ENCODE measurements at regions of chr7 and their contacts with region 1.

Region 1: DNA sequence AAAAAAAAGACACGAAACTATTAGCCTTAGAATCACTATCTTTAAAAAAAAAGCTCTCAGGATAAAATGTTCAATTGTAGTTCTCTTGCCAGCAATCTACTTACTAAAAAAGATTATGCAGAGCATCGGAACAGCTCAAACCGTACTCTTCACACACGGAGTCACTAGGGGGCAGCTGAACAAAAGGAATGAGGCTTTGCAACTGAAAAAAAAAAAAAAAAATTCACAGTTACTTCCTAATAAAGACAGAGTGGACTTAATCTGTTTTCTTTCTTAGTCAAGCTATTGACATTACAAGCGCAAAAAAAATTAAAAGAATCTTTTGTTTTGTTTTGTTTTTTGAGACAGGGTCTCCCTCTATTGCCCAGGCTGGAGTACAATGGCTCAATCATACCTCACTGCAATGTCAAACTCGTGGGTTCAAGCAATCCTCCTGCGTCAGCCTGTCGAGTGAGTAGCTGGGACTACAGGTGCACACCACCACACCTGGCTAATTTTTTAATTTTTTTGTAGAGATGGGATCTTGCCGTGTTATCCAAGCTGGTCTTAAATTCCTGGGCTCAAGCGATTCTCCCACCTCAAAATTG is 11.5 kb downstream of the PMS2 start:
- DNase-seq: no peak
- ATAC-seq: peak; percentile 71
- H3K4me3 Mint-ChIP-seq: no peak overlapping the region
- H3K27ac Mint-ChIP-seq: no peak overlapping the region
- H3K4me1 Mint-ChIP-seq: no peaks in the 10 kb centered on the region
- H3K27me3 Mint-ChIP-seq: no peaks in the 10 kb centered on the region
- CTCF ChIP-seq: peak; percentile 35

Region 2: DNA sequence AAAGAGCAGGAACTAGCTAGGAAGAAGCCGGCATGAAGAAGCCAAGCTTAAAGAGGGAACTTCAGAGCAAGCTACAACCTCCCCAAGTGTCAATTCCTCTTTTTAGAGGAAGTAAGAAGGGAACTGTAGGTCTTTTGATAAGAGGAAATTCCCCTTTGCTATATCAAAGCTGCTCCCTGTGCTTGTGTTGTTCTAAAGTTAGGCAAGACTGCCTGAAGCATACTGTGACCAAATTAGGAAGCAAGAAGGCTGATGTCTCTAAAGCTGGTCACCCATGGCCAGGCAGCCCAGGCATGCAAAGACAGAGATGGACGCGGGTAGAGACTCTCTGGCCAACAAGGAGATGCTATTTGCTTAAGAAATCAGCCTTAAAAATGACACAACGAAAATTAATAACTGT is 303.8 kb before region 1 on chr7:
- CTCF ChIA-PET with region 1: no interaction called
- POLR2A ChIA-PET with region 1: no interaction called
- intact Hi-C with region 1: no loop called
- DNase-seq: no peak
- ATAC-seq: peak; percentile 77
- H3K4me3 Mint-ChIP-seq: peak overlapping the region; percentile 87
- H3K27ac Mint-ChIP-seq: peak overlapping the region; percentile 91
- H3K4me1 Mint-ChIP-seq: peaks cover 100% of the 10 kb centered on the region
- H3K27me3 Mint-ChIP-seq: no peaks in the 10 kb centered on the region
- CTCF ChIP-seq: no peak

Region 3: GRCh38 chr7:6106140-6106904 is 109.0 kb after region 1 on chr7:
- CTCF ChIA-PET with region 1: interaction called, 4 read pairs
- POLR2A ChIA-PET with region 1: interaction called, 4 read pairs
- intact Hi-C with region 1: loop called (anchors 1 kb)
- DNase-seq: no peak
- ATAC-seq: no peak
- H3K4me3 Mint-ChIP-seq: peak overlapping the region; percentile 89
- H3K27ac Mint-ChIP-seq: peak overlapping the region; percentile 88
- H3K4me1 Mint-ChIP-seq: peaks cover 35% of the 10 kb centered on the region
- H3K27me3 Mint-ChIP-seq: no peaks in the 10 kb centered on the region
- CTCF ChIP-seq: no peak

Region 4: GRCh38 chr7:6323967-6324701 is 326.8 kb after region 1 on chr7:
- CTCF ChIA-PET with region 1: interaction called, 53 read pairs
- POLR2A ChIA-PET with region 1: no interaction called
- intact Hi-C with region 1: loop called (anchors 1 kb)
- DNase-seq: no peak
- ATAC-seq: no peak
- H3K4me3 Mint-ChIP-seq: no peak overlapping the region
- H3K27ac Mint-ChIP-seq: no peak overlapping the region
- H3K4me1 Mint-ChIP-seq: peaks cover 4% of the 10 kb centered on the region
- H3K27me3 Mint-ChIP-seq: peaks cover 2% of the 10 kb centered on the region
- CTCF ChIP-seq: no peak

Region 5: DNA sequence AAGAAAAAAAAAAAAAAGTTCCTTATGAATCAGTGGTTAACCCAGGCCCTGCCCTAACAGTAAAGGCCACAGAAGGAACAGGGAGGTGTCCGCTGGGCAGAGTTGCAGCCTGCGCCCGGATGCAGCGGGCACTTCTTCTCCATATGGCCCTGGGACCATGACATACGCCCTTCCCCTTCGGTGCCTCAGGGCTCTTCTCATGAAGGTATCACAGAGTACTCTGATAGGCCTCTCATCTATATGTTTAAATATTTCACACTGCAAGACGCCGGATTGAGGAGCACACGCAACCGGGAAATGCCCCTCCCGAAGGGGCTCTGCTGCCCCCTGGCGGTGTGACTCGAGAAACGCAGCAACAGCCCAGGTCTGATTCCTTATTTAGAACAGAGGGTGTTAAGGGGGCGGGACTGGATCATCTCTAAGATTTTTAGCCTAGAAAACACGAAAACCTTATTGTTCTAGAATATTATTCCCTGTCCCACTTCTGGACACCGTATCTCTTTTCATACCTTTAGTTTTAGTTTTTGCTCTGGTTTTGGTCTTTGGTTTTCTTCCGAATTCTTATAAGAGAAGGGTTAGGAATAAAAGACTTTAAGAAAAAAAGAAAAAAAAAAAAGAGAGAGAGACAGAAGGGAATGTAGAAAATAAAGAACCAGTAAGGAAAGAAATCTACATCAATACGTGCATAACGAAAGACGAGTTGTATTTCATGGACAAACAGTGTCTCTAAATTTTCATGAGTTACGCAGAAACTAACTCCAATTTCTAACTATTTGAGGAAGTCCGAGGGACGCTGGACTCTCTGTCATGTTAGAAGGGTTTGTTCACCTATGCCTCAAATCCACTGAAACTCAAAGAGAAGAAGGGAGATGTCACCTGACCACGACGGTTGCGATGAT is 438.4 kb after region 1 on chr7:
- CTCF ChIA-PET with region 1: interaction called, 7 read pairs
- POLR2A ChIA-PET with region 1: no interaction called
- intact Hi-C with region 1: loop called (anchors 1 kb)
- DNase-seq: peak; percentile 83
- ATAC-seq: peak; percentile 92
- H3K4me3 Mint-ChIP-seq: peak overlapping the region; percentile 76
- H3K27ac Mint-ChIP-seq: peak overlapping the region; percentile 76
- H3K4me1 Mint-ChIP-seq: peaks cover 43% of the 10 kb centered on the region
- H3K27me3 Mint-ChIP-seq: no peaks in the 10 kb centered on the region
- CTCF ChIP-seq: peak; percentile 65

Region 6: GRCh38 chr7:6460303-6460702 is 463.0 kb after region 1 on chr7:
- CTCF ChIA-PET with region 1: no interaction called
- POLR2A ChIA-PET with region 1: no interaction called
- intact Hi-C with region 1: no loop called
- DNase-seq: no peak
- ATAC-seq: no peak
- H3K4me3 Mint-ChIP-seq: no peak overlapping the region
- H3K27ac Mint-ChIP-seq: no peak overlapping the region
- H3K4me1 Mint-ChIP-seq: peaks cover 4% of the 10 kb centered on the region
- H3K27me3 Mint-ChIP-seq: no peaks in the 10 kb centered on the region
- CTCF ChIP-seq: no peak

Measured in activated B cell treated with CpG ODN at 0.5 μM for 24 hours (primary cell).